HepG2 (cell line): ENCODE measurements at regions of chr6 and their contacts with region 1.

Region 1: GRCh38 chr6:42873313-42873712 is 6.1 kb upstream of the RPL7L1 start:
- DNase-seq: no peak
- ATAC-seq: no peak
- H3K4me3 ChIP-seq: no peak overlapping the region
- H3K27ac ChIP-seq: no peak overlapping the region
- H3K4me1 ChIP-seq: peaks cover 34% of the 10 kb centered on the region
- H3K27me3 ChIP-seq: no peaks in the 10 kb centered on the region
- CTCF ChIP-seq: no peak
- EP300 ChIP-seq: no peak
- POLR2A ChIP-seq: no peak
- RAD21 ChIP-seq: no peak

Region 2: GRCh38 chr6:41909727-41910126 is 963.6 kb before region 1 on chr6:
- CTCF ChIA-PET with region 1: no interaction called
- POLR2A ChIA-PET with region 1: no interaction called
- in situ Hi-C with region 1: no loop called
- intact Hi-C with region 1: loop called (anchors 5 kb)
- DNase-seq: no peak
- ATAC-seq: no peak
- H3K4me3 ChIP-seq: no peak overlapping the region
- H3K27ac ChIP-seq: no peak overlapping the region
- H3K4me1 ChIP-seq: no peaks in the 10 kb centered on the region
- H3K27me3 ChIP-seq: no peaks in the 10 kb centered on the region
- CTCF ChIP-seq: no peak
- EP300 ChIP-seq: no peak
- POLR2A ChIP-seq: no peak
- RAD21 ChIP-seq: no peak

Region 3: GRCh38 chr6:42860481-42860880 is 12.8 kb before region 1 on chr6:
- CTCF ChIA-PET with region 1: no interaction called
- POLR2A ChIA-PET with region 1: no interaction called
- in situ Hi-C with region 1: no loop called
- intact Hi-C with region 1: no loop called
- DNase-seq: no peak
- ATAC-seq: no peak
- H3K4me3 ChIP-seq: no peak overlapping the region
- H3K27ac ChIP-seq: no peak overlapping the region
- H3K4me1 ChIP-seq: no peaks in the 10 kb centered on the region
- H3K27me3 ChIP-seq: no peaks in the 10 kb centered on the region
- CTCF ChIP-seq: no peak
- EP300 ChIP-seq: no peak
- POLR2A ChIP-seq: no peak
- RAD21 ChIP-seq: no peak